ENCODE measurements at regions of chr4 and their contacts with region 1.

Region 1: GRCh38 chr4:139453371-139454110 is 380 bp upstream of the RAB33B start:
- DNase-seq: peak; percentile 91 to 98 (median 92)
- ATAC-seq: peak; percentile 94
- H3K4me3 ChIP-seq: peak overlapping the region; percentile 53
- H3K27ac ChIP-seq: peak overlapping the region; percentile 88
- H3K4me1 ChIP-seq: peaks cover 19 to 28% of the 10 kb centered on the region in 2 experiments
- H3K27me3 ChIP-seq: no peaks in the 10 kb centered on the region
- CTCF ChIP-seq: peak in 2 of 3 experiments; percentile 3 to 48; a peak in 2 of 6 replicates
- EP300 ChIP-seq: no peak; the same call in 1 of the 2 replicates
- POLR2A ChIP-seq: peak; percentile 96
- RAD21 ChIP-seq: no peak

Region 2: DNA sequence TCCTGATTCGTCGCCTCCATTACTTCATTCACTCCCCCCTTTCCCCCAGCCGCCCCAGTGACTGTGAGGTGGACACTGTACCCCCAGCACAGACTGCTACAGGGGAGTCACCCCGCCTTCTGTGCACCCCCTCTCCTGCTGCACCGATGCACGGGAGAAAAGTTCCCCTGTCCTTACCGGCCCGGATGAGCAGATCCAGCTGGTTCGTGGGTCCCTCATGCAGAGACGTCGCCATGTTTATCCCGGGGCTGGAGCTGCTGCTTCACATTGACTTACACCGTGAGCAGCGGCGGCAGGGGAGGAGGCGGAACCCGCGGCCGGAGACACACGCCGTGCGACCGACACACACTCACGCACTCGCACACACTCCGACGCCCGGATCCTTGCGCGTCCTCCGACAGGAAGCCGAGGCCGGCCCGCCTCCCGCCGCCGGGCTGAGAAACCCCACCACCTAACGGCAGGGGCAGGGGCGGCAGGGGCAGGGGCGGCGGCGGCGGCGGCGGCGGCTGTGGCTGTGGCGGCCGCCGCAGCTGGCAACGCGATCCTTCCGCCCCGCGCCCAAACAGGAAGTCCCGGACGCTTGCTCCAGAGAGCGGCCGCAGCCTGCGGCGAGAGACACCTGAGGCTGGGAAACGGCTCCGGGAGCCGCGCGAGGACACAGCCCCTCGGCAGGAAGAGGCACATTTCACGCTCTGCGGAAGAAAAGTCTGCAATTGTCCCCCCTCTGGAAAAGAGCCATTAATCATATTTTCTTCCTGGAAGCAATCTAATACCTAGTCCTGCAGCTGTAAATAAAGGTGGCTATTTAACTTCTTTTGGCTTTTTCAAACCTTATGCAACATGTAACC is 369.4 kb before region 1 on chr4:
- CTCF ChIA-PET with region 1: no interaction called
- POLR2A ChIA-PET with region 1: interaction called, 3 read pairs
- in situ Hi-C with region 1: no loop called
- intact Hi-C with region 1: loop called (anchors 5 kb)
- DNase-seq: peak; percentile 70 to 92 (median 75)
- ATAC-seq: peak; percentile 72
- H3K4me3 ChIP-seq: peak overlapping the region; percentile 85
- H3K27ac ChIP-seq: peak overlapping the region; percentile 98
- H3K4me1 ChIP-seq: peaks cover 6 to 8% of the 10 kb centered on the region in 2 experiments; a peak in 4 of 5 replicates
- H3K27me3 ChIP-seq: no peaks in the 10 kb centered on the region
- CTCF ChIP-seq: peak in 2 of 3 experiments; percentile 16 to 46; a peak in 2 of 6 replicates
- EP300 ChIP-seq: no peak
- POLR2A ChIP-seq: peak; percentile 85
- RAD21 ChIP-seq: no peak

Region 3: GRCh38 chr4:139129206-139129605 is 324.3 kb before region 1 on chr4:
- CTCF ChIA-PET with region 1: no interaction called
- POLR2A ChIA-PET with region 1: no interaction called
- in situ Hi-C with region 1: no loop called
- intact Hi-C with region 1: no loop called
- DNase-seq: no peak
- ATAC-seq: no peak
- H3K4me3 ChIP-seq: no peak overlapping the region
- H3K27ac ChIP-seq: no peak overlapping the region
- H3K4me1 ChIP-seq: no peaks in the 10 kb centered on the region
- H3K27me3 ChIP-seq: no peaks in the 10 kb centered on the region
- CTCF ChIP-seq: no peak
- EP300 ChIP-seq: no peak
- POLR2A ChIP-seq: no peak
- RAD21 ChIP-seq: no peak

Region 4: GRCh38 chr4:139301113-139301820 is 152.3 kb before region 1 on chr4 and contains the start of gene NAA15:
- CTCF ChIA-PET with region 1: no interaction called
- POLR2A ChIA-PET with region 1: interaction called, 4 read pairs
- in situ Hi-C with region 1: no loop called
- intact Hi-C with region 1: loop called (anchors 2 kb)
- DNase-seq: peak; percentile 94 to 99 (median 96)
- ATAC-seq: peak; percentile 87
- H3K4me3 ChIP-seq: peak within 1 kb of the TSS; percentile 99
- H3K27ac ChIP-seq: peak within 1 kb of the TSS; percentile 98
- H3K4me1 ChIP-seq: peaks cover 11 to 12% of the 10 kb centered on the region in 2 experiments
- H3K27me3 ChIP-seq: no peaks in the 10 kb centered on the region
- CTCF ChIP-seq: no peak
- EP300 ChIP-seq: no peak
- POLR2A ChIP-seq: peak; percentile 94
- RAD21 ChIP-seq: no peak
- polyA plus RNA-seq, gene NAA15: 37.8 to 41.3 TPM

Region 5: GRCh38 chr4:139367421-139368090 is 86.0 kb before region 1 on chr4:
- CTCF ChIA-PET with region 1: no interaction called
- POLR2A ChIA-PET with region 1: no interaction called
- in situ Hi-C with region 1: no loop called
- intact Hi-C with region 1: no loop called
- DNase-seq: no peak
- ATAC-seq: no peak
- H3K4me3 ChIP-seq: no peak overlapping the region
- H3K27ac ChIP-seq: no peak overlapping the region
- H3K4me1 ChIP-seq: no peaks in the 10 kb centered on the region
- H3K27me3 ChIP-seq: no peaks in the 10 kb centered on the region
- CTCF ChIP-seq: no peak
- EP300 ChIP-seq: no peak
- POLR2A ChIP-seq: no peak
- RAD21 ChIP-seq: no peak

Region 6: DNA sequence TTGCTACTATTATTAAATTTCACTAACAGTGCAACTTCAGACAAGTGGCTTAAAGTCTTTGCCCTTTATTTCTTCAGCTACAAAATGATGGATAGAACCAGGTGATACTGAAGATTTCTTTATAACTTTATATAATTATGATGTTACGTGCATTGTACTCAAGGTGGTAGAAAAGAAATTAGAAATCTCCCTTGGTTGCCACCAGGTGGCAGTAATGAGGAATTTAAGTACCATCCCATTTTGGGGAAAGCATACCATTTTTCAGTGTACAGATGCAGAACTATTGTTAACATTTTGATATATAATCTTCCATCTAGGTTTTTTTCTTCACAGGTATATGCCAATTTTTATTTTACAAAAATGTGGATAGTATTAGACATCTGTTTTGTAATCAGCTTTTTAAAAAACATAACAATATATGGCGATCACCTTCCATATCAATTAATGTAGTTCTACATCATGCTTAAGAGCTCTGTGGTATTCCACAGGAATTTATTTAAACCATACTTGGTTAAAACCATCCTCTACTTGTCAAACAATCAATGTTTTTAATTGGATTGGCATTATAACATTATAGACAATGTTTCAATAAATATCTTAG is 37.4 kb before region 1 on chr4:
- CTCF ChIA-PET with region 1: no interaction called
- POLR2A ChIA-PET with region 1: no interaction called
- in situ Hi-C with region 1: no loop called
- intact Hi-C with region 1: loop called (anchors 2 kb)
- DNase-seq: peak; percentile 31 to 72 (median 36)
- ATAC-seq: peak; percentile 79
- H3K4me3 ChIP-seq: no peak overlapping the region
- H3K27ac ChIP-seq: no peak overlapping the region
- H3K4me1 ChIP-seq: no peaks in the 10 kb centered on the region
- H3K27me3 ChIP-seq: no peaks in the 10 kb centered on the region
- CTCF ChIP-seq: peak; percentile 49 to 70 (median 57); a peak in 5 of 6 replicates
- EP300 ChIP-seq: no peak
- POLR2A ChIP-seq: no peak
- RAD21 ChIP-seq: peak in 1 of 2 experiments; percentile 67; a peak in 3 of 4 replicates